ENCODE measurements at regions of chr19 and their contacts with region 1.

Region 1: GRCh38 chr19:48842789-48843162 is 6.5 kb upstream of the HSD17B14 start:
- DNase-seq: peak; percentile 65
- H3K4me3 Mint-ChIP-seq: no peak overlapping the region
- H3K27ac Mint-ChIP-seq: no peak overlapping the region
- H3K4me1 Mint-ChIP-seq: peaks cover 6% of the 10 kb centered on the region
- H3K27me3 Mint-ChIP-seq: peaks cover 2% of the 10 kb centered on the region

Region 2: GRCh38 chr19:48646001-48646721 is 196.6 kb before region 1 on chr19 and contains the start of gene CA11:
- CTCF ChIA-PET with region 1: interaction called, 11 read pairs
- DNase-seq: peak; percentile 95
- H3K4me3 Mint-ChIP-seq: peak within 1 kb of the TSS; percentile 75
- H3K27ac Mint-ChIP-seq: peak within 1 kb of the TSS; percentile 81
- H3K4me1 Mint-ChIP-seq: peaks cover 55% of the 10 kb centered on the region
- H3K27me3 Mint-ChIP-seq: peaks cover 16% of the 10 kb centered on the region

Region 3: GRCh38 chr19:48795055-48795684 is 47.6 kb before region 1 on chr19:
- CTCF ChIA-PET with region 1: interaction called, 176 read pairs
- DNase-seq: peak; percentile 92
- H3K4me3 Mint-ChIP-seq: peak overlapping the region; percentile 86
- H3K27ac Mint-ChIP-seq: peak overlapping the region; percentile 80
- H3K4me1 Mint-ChIP-seq: peaks cover 8% of the 10 kb centered on the region
- H3K27me3 Mint-ChIP-seq: no peaks in the 10 kb centered on the region

Region 4: GRCh38 chr19:48830088-48830487 is 12.7 kb before region 1 on chr19:
- CTCF ChIA-PET with region 1: interaction called, 11 read pairs
- DNase-seq: no peak
- H3K4me3 Mint-ChIP-seq: no peak overlapping the region
- H3K27ac Mint-ChIP-seq: no peak overlapping the region
- H3K4me1 Mint-ChIP-seq: no peaks in the 10 kb centered on the region
- H3K27me3 Mint-ChIP-seq: peaks cover 15% of the 10 kb centered on the region

Measured in activated naive CD4-positive, alpha-beta T cell treated with anti-CD3 and anti-CD28 coated beads, Interleukin-2, amount 10 ng/mL, durations not matched to agents 7 days and 5 days (primary cell).